Activated CD8-positive, alpha-beta memory T cell treated with anti-CD3 and anti-CD28 coated beads, Interleukin-2, amount 10 ng/mL, durations not matched to agents 7 days and 5 days (primary cell): ENCODE measurements at regions of chr11 and their contacts with region 1.

Region 1: GRCh38 chr11:6531267-6531752 is 34.2 kb downstream of the DNHD1 start:
- DNase-seq: no peak
- ATAC-seq: peak; percentile 84
- H3K4me3 Mint-ChIP-seq: no peak overlapping the region
- H3K27ac Mint-ChIP-seq: no peak overlapping the region
- H3K4me1 Mint-ChIP-seq: peaks cover 7% of the 10 kb centered on the region
- H3K27me3 Mint-ChIP-seq: no peaks in the 10 kb centered on the region

Region 2: DNA sequence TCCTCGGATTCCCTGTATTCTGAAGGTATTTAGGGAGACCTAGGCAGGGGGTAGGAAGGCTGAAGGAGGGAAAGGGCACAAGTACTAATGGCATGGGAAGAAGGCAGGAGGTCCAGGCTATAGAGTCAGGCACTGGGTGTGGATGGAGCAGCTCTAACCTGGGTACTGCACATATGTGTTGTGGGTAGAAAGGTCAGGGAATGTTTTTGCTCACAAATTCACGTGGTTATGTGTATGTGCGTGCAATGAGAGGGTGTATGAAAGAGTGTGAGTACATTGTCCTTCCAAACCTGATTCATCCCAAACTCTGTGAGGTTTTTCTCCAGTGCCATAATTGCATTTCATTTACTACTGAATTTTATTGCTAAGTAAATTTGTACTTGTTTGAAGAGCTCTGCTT is 11.0 kb before region 1 on chr11:
- CTCF ChIA-PET with region 1: interaction called, 11 read pairs
- DNase-seq: no peak
- ATAC-seq: no peak
- H3K4me3 Mint-ChIP-seq: no peak overlapping the region
- H3K27ac Mint-ChIP-seq: no peak overlapping the region
- H3K4me1 Mint-ChIP-seq: peaks cover 8% of the 10 kb centered on the region
- H3K27me3 Mint-ChIP-seq: no peaks in the 10 kb centered on the region

Region 3: GRCh38 chr11:6563121-6563619 is 31.9 kb after region 1 on chr11:
- CTCF ChIA-PET with region 1: interaction called, 10 read pairs
- DNase-seq: no peak
- ATAC-seq: no peak
- H3K4me3 Mint-ChIP-seq: no peak overlapping the region
- H3K27ac Mint-ChIP-seq: no peak overlapping the region
- H3K4me1 Mint-ChIP-seq: no peaks in the 10 kb centered on the region
- H3K27me3 Mint-ChIP-seq: no peaks in the 10 kb centered on the region

Region 4: DNA sequence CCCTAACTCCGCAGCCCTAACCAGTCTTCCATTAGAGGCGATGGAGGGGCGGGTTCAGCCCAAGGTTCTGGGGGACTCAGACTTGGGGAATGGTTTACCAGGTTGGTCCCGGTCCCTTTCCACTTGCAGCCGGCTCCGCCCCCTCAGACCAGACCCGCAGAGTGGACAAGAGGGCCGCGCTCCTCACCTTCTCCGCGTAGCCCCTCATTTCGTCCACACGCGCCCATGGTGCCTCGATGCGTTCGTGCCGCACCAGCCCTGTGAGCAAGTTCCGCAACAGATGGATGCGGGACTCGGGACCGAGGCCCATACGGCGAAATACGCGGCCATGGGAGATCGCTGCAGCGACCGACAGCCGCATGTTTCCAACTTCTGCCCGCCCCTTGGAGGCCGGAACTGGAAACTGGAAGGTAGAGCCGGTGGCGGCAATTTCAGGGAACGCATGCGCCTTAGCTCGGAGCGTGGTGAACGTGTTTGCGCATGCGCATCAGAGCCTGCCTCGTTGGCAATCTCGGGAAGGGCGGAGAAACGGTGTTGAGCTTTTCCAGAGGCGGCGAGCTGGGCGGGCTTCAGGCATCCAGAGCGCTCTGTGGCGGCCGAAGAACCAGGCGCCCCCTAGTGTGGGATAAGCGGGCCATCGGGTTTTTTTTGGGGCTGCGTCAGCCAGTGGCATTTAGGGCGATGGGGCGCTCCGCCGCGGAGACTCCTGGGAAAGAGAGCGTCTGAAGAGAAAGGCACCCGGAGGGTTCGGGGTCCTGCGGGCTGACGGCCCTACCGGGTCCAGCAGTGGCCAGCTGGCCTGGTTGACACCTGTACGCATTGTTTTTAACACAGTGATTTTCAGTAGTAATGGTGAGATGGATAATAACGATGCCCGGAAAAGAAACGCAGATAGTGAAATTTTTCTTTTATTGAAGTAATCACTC is 151.9 kb after region 1 on chr11 and contains the start of gene MRPL17:
- CTCF ChIA-PET with region 1: interaction called, 21 read pairs
- DNase-seq: peak; percentile 100
- ATAC-seq: peak; percentile 97
- H3K4me3 Mint-ChIP-seq: peak within 1 kb of the TSS; percentile 97
- H3K27ac Mint-ChIP-seq: peak within 1 kb of the TSS; percentile 97
- H3K4me1 Mint-ChIP-seq: peaks cover 20% of the 10 kb centered on the region
- H3K27me3 Mint-ChIP-seq: no peaks in the 10 kb centered on the region
- total RNA-seq, gene MRPL17: 69.4 to 81.0 TPM

Region 5: GRCh38 chr11:7364660-7365059 is 833.4 kb after region 1 on chr11:
- CTCF ChIA-PET with region 1: no interaction called
- DNase-seq: no peak
- ATAC-seq: no peak
- H3K4me3 Mint-ChIP-seq: no peak overlapping the region
- H3K27ac Mint-ChIP-seq: no peak overlapping the region
- H3K4me1 Mint-ChIP-seq: no peaks in the 10 kb centered on the region
- H3K27me3 Mint-ChIP-seq: no peaks in the 10 kb centered on the region